ENCODE measurements at regions of chr16 and their contacts with region 1.

Region 1: DNA sequence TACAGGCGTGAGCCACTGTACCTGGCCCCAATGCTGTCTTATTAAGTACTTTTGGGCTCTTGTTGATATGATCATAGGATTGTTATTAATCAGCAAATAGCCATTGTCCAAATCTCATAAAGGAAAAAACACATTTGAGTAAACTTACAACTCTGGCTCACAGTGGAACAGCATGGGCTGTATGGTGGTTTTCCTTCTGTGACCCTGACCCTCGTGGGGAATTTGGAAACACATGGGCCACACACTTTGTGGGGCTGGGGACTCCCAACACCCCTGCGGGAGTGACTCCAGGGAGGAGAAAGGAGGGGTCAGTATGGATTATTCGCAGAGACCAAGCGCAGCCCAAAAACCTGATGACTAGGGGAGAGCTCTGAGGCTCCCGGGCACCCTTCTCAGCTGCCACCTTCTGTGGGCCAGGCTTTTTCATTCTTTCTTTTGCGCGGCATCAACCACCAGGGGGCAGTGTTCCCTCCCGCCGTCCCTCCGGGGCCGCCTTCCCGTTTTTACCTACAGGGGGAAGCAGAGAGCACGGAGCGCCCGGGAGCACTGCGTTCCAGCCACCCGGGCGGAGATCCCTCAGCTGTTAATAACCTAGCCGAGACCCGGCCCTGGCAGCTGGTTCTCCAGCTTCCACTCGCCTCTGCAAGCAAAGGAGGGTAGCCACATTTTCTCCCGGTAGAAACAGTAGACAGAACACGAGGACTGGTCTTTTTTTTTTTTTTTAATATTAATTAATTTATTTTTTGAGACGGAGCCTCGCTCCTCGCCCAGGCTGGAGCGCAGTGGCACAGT is 9.7 kb downstream of the TSNAXIP1 start:
- DNase-seq: peak; percentile 97

Region 2: DNA sequence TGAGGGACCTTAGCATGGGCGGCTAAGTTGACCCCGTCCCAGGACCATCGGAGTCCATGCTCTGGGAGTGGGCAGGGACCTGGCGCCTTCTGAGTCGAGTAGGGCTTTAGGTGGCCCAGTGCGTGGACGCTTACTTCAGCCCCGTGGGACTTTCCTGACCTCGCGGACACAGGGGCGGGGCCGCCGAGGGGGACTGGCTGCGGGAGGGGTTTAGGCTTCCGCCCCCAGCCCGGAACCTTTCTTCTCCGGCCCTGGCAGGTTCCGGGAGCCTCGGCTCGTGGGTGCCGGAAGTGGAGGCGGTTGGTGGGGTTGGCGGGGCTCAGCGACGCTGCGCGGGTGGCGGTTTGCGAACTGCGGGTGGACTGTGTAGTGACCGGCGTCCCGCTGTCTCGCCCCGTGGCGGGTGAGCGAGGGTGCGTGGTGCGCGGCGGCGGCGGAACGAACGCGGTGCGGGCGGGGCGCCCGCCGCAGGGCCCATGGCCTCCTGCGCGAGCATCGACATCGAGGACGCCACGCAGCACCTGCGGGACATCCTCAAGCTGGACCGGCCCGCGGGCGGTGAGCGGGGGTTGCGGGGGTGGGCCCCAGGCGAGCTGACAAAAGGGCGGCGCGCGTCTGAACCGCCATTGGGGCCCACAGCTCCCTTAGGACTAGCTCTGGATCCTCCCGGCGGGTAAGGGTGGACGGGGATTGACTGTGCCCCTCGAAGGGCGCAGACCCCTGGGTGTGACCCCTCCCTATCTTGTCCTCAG is 56.5 kb after region 1 on chr16 and contains the start of gene EDC4:
- intact Hi-C with region 1: loop called in 1 of 2 experiments (anchors 10 kb)
- DNase-seq: peak; percentile 96
- total RNA-seq, gene EDC4: 37.4 to 43.1 TPM

Measured in posterior vena cava (tissue), 2 donors.